Activated T-helper 1 cell treated with anti-CD3 and anti-CD28 coated beads, Interleukin-12 subunit alpha, Interleukin-12 subunit beta, Interleukin-2, Interleukin-4 antibody, amounts not matched to agents 30 ng/mL and 10 ng/mL and 1 ng/mL, durations not matched to agents 14 hours and 24 hours and 36 hours (primary cell): ENCODE measurements at regions of chr15 and their contacts with region 1.

Region 1: DNA sequence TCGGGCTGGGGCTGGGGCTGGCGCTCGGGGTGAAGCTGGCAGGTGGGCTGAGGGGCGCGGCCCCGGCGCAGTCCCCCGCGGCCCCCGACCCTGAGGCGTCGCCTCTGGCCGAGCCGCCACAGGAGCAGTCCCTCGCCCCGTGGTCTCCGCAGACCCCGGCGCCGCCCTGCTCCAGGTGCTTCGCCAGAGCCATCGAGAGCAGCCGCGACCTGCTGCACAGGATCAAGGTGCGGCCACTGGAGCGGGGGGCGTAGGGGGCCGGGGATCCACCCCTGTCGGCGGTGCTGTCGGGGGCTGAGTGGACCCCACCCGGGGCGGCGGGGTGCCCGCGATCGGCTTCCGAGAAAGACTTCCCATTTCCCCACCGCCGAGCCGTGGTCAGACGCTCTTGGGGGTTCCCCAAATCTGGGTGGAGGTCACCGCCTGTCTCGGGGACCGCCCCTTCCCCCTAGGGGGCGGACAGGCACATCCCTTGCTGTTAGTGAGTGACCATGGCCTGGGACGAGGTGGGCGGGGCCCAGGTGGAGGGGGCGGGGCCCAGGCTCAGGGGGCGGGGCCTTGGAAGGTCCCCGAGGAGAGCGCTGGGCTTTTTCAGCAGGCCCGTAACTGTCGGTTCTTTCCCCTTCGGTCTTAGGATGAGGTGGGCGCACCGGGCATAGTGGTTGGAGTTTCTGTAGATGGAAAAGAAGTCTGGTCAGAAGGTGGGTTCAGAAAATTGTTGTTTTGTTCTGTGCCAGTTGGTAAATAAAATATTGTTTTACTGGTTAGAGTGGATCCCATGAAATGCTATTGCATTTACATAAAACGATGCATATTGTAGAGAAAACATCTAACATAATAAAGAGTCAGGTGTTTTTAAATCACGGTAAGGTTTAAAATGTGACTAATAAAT is 587 bp downstream of the LACTB start:
- DNase-seq: peak; percentile 83
- H3K4me3 Mint-ChIP-seq: peak overlapping the region; percentile 93
- H3K27ac Mint-ChIP-seq: peak overlapping the region; percentile 83
- H3K4me1 Mint-ChIP-seq: peaks cover 21% of the 10 kb centered on the region
- H3K27me3 Mint-ChIP-seq: no peaks in the 10 kb centered on the region

Region 2: DNA sequence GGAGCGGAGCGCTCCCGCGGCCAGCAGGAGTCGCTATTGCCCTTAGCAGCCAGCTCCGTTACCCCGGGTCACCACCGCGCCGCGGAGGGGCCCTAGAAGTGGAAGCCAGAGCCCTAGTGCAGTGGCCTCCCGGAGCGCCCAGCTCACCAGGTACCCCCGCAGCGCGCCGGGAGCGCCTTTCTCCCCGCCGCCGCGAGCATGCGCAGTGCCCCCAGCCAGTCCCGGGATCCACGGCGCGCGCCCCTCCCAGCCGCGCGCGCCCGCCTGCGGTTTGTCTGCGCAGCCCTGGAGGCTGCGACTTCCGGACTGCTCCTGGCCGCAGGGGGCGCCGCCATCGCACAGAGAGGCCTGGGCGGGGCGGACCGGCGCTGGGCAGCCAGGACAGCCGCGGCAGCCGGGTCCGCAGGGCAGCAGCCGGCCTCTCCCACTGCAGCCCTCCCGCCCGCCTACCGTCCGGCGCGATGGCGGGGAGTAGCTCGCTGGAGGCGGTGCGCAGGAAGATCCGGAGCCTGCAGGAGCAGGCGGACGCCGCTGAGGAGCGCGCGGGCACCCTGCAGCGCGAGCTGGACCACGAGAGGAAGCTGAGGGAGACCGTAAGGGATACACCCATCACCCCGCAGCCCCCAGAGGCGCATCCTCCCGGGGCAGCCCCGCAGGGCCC is 74.0 kb before region 1 on chr15:
- intact Hi-C with region 1: loop called (anchors 1 kb)
- DNase-seq: peak; percentile 79
- H3K4me3 Mint-ChIP-seq: peak overlapping the region; percentile 92
- H3K27ac Mint-ChIP-seq: no peak overlapping the region
- H3K4me1 Mint-ChIP-seq: peaks cover 20% of the 10 kb centered on the region
- H3K27me3 Mint-ChIP-seq: peaks cover 55% of the 10 kb centered on the region

Region 3: DNA sequence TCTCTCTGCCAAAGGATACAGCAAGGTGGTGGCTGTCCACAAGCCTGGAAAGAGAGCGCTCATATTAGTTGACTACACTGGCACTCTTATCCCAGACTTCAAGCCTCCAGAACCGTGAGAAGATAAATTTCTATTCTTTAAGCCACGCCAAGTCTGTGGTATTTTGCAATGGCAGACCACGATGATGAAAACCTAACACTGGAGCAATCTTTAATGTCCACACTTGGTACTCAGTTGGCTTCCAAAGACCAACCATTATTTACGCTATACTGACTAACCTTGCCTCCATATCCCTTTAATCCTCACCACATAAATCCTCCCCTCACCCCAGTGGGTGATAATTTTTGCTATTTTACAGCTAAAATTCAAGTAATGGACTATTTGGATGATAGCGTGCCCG is 17.5 kb before region 1 on chr15:
- intact Hi-C with region 1: no loop called
- DNase-seq: no peak
- H3K4me3 Mint-ChIP-seq: no peak overlapping the region
- H3K27ac Mint-ChIP-seq: no peak overlapping the region
- H3K4me1 Mint-ChIP-seq: no peaks in the 10 kb centered on the region
- H3K27me3 Mint-ChIP-seq: peaks cover 12% of the 10 kb centered on the region

Region 4: DNA sequence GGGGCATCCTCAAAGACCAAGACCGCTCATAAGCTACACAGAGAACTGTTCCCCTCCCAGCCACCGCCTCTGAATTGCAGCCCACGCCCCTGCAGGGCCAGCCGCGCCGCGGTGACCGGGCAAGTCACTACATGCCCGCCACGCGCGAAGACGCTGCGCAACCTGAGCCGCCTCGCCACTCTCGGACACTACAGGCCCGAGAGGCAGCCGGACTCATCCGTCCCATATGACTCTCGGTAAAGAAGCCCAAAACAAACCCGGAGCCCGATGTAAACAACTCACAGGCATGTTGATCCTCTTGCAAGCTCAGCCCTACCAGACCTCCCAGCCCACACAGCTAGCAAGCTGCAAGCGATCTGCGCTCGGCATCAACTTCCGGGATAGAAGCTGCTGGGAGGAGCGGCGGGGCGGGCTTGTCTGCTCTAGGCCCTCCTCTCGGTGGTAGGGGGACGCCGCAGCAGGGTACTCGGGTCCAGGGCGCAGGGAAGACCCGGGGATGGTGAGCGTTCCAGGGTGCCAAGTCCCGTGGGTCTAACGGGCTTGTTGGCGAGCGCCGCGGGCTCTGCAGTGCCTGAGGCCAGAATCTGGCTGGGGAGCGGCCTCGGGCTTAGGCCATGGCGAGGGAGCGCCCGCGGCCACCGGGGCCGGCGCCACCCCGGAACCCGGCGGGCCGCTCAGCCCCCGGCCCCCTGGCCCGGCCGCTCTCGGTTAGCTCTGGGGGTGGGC is 35.0 kb after region 1 on chr15 and contains the start of gene RPS27L:
- intact Hi-C with region 1: loop called (anchors 1 kb)
- DNase-seq: peak; percentile 86
- H3K4me3 Mint-ChIP-seq: peak within 1 kb of the TSS; percentile 98
- H3K27ac Mint-ChIP-seq: peak within 1 kb of the TSS; percentile 98
- H3K4me1 Mint-ChIP-seq: peaks cover 21% of the 10 kb centered on the region
- H3K27me3 Mint-ChIP-seq: no peaks in the 10 kb centered on the region
- total RNA-seq, gene RPS27L: 163 and 164 TPM in 2 replicates